Activated CD4-positive, alpha-beta memory T cell treated with anti-CD3 and anti-CD28 coated beads, Interleukin-2, amount 10 ng/mL, durations not matched to agents 7 days and 5 days (primary cell): ENCODE measurements at regions of chr15 and their contacts with region 1.

Region 1: DNA sequence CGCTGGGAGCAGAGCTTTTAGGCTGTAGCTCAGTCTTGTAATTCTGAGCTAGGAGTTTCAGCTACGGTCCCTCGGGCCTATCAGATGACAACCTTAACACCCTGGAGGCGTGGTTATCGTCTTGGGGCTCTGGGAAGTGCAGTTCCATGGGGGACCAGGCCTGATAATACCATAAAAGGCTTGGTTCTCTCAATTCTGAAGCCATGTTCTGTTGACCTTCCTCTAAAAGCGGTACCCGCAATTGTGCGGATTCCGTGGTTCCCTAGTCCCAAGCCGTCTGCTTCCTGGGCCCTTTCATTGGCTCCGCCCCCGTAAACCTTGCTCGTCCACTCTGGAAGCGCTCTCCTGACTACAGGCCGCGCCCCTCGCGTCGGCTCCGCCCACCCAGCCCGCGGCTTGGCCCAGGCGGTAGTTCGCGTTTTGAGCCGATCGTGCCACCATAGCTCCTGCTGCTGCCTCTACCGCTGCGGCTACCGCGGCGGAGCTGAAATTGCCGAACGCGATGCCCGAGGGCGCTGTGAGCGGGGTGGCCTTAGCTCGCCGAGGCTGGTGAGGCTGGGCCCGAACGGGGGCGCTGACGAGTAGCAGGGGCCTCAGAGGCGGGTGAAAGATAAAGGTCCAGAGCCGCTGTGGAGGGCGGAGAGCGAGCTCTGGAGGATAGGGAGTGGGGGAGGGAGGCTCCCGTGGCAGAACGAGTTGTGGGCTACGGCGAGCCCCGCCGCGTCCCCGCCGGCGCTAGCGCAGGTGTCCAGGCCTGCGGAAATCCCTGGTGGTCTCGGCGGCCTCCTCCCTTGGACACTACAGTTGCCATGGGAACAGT is at the start of gene MAPKBP1:
- DNase-seq: peak; percentile 99
- H3K4me3 Mint-ChIP-seq: peak within 1 kb of the TSS; percentile 94
- H3K27ac Mint-ChIP-seq: peak within 1 kb of the TSS; percentile 95
- H3K4me1 Mint-ChIP-seq: peaks cover 59% of the 10 kb centered on the region
- H3K27me3 Mint-ChIP-seq: no peaks in the 10 kb centered on the region
- total RNA-seq, gene MAPKBP1: 28.9 to 31.6 TPM

Region 2: GRCh38 chr15:41465822-41466421 is 308.4 kb before region 1 on chr15:
- CTCF ChIA-PET with region 1: interaction called, 18 read pairs
- POLR2A ChIA-PET with region 1: no interaction called
- DNase-seq: peak; percentile 17
- H3K4me3 Mint-ChIP-seq: no peak overlapping the region
- H3K27ac Mint-ChIP-seq: peak overlapping the region; percentile 48
- H3K4me1 Mint-ChIP-seq: peaks cover 14% of the 10 kb centered on the region
- H3K27me3 Mint-ChIP-seq: no peaks in the 10 kb centered on the region

Region 3: DNA sequence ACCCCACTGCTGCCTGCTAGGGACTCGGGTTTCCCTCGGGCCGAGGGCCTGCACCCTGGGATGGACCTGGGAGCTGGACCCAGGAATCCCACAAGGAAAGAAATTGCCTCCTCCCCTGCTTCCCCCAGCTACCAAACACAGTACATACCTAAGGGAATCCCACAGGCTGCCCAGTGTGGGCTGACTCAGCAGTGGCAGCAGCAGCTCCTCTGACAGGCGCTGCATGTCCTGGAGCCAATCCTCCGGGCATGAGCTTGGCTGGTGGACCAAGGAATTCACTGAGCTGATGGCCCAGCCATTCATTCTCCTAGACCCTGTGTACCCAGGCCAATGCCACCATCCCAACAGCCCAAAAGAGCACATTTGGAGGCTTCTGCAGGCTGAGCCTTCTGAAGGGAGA is 251.2 kb before region 1 on chr15:
- CTCF ChIA-PET with region 1: no interaction called
- POLR2A ChIA-PET with region 1: no interaction called
- DNase-seq: no peak
- H3K4me3 Mint-ChIP-seq: no peak overlapping the region
- H3K27ac Mint-ChIP-seq: no peak overlapping the region
- H3K4me1 Mint-ChIP-seq: no peaks in the 10 kb centered on the region
- H3K27me3 Mint-ChIP-seq: no peaks in the 10 kb centered on the region

Region 4: GRCh38 chr15:41695750-41696426 is 78.4 kb before region 1 on chr15:
- CTCF ChIA-PET with region 1: interaction called, 18 read pairs
- POLR2A ChIA-PET with region 1: interaction called, 7 read pairs
- DNase-seq: peak; percentile 66
- H3K4me3 Mint-ChIP-seq: peak overlapping the region; percentile 5
- H3K27ac Mint-ChIP-seq: peak overlapping the region; percentile 49
- H3K4me1 Mint-ChIP-seq: peaks cover 39% of the 10 kb centered on the region
- H3K27me3 Mint-ChIP-seq: no peaks in the 10 kb centered on the region

Region 5: DNA sequence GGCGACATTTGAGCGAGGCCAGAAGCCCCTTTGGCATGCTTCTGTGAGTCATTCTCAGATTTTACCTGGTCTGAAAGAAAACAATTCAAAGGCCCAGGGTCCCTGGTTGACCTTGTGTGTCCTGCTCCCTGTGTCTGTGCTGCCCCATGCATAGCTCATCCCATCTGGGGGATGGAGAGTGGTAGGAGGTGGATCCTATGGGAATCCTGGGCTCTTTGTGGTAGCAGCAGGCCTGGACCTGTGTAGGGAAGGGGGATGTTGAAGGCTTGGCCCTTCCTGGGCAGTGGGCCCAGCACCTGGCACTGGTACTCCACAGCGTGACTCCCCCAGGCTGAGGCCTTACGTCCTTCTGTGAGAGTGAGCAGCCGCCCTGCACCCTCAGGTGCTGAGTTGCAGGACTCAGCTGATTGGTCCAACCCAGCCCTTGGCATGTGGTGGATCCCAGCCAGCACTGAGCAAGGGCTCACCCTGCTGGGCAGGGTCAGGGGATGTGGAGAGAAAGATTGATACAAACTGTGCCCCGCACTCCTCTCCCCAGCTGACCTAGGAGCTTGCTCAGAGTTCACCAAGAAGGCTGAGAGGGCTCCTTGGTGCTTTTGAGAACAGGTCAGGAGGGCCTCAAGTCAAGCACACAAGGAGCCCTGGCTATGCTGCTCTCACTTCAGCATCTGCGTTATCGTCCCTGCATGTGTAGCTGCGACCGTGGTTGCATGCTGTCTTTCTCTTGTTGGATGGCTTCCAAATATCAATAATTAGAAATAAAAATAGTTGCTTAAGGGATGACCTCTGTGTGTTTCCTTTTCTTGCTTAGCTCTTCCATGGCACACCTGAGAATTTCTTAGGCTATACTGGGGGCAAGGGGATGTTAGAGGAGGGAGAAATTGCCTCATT is 32.3 kb after region 1 on chr15:
- CTCF ChIA-PET with region 1: interaction called, 270 read pairs
- POLR2A ChIA-PET with region 1: interaction called, 59 read pairs
- DNase-seq: no peak
- H3K4me3 Mint-ChIP-seq: no peak overlapping the region
- H3K27ac Mint-ChIP-seq: no peak overlapping the region
- H3K4me1 Mint-ChIP-seq: peaks cover 26% of the 10 kb centered on the region
- H3K27me3 Mint-ChIP-seq: no peaks in the 10 kb centered on the region

Region 6: DNA sequence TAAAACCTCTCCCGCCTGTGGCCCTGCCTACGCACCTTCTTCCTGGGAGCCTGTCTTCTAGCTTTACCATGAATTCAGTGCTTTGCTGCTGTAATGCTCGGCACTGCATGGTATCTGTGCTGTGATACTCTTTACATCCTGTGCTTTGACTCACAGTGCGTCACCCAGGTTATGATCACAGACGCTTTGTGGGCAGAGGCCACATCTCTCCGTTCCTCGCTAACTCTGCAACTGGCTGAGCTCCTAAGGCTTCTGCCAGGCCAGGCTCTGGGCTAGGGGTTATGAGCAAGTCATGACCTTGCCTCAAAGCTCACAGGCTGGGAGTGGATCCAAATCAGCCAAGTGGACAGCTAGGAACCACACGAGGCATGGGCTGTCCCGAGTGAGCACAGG is 96.4 kb after region 1 on chr15:
- CTCF ChIA-PET with region 1: interaction called, 12 read pairs
- POLR2A ChIA-PET with region 1: interaction called, 7 read pairs
- DNase-seq: peak; percentile 78
- H3K4me3 Mint-ChIP-seq: no peak overlapping the region
- H3K27ac Mint-ChIP-seq: peak overlapping the region; percentile 84
- H3K4me1 Mint-ChIP-seq: peaks cover 19% of the 10 kb centered on the region
- H3K27me3 Mint-ChIP-seq: no peaks in the 10 kb centered on the region

Region 7: DNA sequence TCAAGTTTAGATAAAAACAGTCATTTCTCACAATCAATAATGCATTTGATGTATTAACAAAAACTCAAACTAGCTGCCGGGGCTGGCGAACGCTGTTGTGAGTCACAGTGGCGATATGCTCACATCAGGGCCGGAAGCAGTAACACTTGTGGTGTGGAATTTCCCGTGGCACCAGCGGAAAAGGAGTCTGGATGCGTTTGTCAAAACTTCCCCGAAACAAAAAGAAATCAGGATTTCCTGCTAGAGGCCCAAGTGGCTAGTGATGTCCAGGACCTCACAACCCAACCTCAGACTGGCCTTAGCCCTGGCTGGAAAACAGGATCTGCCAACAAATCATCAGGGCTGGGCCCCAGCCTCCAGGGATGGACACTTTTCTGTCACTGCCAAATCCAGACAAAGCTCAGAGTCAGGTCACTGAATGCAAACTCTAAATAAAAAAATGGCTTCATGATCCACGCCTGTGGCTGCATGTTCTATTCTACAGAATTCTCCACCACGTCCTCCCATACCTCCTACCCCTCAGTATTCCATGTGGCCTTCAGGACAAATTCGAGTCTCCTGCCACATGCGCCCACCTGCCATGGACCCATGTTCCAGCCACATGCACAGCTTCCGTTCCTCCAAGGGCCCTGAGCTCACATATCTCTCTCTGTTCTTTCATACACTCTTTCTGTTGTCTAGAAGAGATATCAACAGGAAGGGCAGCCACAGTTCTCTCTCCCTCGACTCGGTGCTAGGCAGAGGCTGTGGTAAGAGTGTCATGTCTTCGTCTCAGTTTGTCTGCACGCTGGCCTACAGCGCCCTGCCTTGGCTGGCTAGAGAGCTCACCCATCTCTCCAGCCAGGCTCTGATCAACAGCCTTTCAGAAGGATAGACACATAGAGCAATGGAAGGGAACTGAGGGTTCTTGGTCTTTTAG is 162.6 kb after region 1 on chr15:
- CTCF ChIA-PET with region 1: interaction called, 73 read pairs
- POLR2A ChIA-PET with region 1: interaction called, 33 read pairs
- DNase-seq: peak; percentile 83
- H3K4me3 Mint-ChIP-seq: peak overlapping the region; percentile 63
- H3K27ac Mint-ChIP-seq: peak overlapping the region; percentile 99
- H3K4me1 Mint-ChIP-seq: peaks cover 75% of the 10 kb centered on the region
- H3K27me3 Mint-ChIP-seq: no peaks in the 10 kb centered on the region